Astrocyte of the cerebellum (primary cell): ENCODE measurements at regions of chr3 and their contacts with region 1.

Region 1: DNA sequence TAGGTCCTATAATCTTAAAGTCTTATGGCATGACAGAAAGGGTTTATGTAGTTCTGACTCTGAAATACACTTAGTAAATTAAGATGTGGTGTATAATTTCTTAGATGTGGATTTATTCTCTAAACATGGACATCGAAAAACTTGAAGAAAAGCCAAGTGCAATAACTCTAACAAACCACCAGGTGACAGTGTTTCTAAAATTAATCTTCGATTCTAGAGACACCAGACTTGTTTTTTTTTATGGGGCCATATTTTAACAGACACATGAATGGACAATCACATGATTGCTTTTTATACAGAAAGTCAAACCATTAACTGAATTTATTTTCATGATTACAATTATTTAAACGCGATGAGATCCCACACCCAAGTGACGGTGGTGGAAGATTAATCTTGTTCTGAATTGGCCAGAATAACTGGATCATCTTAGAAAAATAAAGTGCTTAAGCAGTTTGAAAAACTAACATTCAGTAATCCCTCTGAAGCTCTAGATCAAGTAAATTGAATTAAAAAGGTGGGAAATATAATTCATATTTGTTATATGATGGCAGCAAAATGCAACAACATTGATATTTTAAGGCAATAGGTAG is 305.1 kb downstream of the LSAMP start:
- DNase-seq: no peak
- H3K4me3 ChIP-seq: no peak overlapping the region
- CTCF ChIP-seq: peak; percentile 66

Region 2: DNA sequence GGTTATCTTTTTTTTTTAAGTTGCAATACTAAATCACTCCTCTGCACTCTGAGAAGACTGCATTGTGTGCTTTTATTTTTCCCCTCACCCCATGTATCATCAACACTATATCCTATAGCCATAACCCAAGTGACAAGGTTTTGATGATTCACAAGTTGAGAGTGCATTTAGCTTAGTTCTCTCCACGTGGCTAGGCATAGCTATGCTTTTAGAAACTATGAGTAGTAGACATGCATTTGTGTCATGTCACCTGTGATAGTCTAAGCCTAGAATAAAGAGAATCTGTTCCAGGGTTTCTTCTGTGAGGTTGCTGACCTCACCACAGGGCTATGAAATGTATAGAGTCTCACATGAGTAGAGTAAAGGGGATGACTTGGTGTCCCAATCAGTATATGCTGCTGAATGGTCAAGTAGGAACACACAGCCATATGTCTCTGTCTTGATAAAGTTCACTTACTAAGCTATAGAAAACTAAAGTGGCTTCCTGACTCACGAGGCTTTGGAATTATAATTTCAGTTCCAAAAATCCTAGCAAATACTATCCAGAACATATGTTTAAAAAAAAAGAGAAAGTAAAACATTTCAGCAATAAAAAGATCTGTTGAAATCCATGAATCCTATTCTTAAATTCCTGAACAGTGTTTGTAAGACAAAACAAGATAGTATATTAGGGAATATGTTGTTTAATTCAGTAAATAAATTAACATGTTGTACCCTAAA is 98.8 kb after region 1 on chr3:
- in situ Hi-C with region 1: loop called (anchors 25 kb)
- DNase-seq: no peak
- H3K4me3 ChIP-seq: no peak overlapping the region
- CTCF ChIP-seq: no peak

Region 3: DNA sequence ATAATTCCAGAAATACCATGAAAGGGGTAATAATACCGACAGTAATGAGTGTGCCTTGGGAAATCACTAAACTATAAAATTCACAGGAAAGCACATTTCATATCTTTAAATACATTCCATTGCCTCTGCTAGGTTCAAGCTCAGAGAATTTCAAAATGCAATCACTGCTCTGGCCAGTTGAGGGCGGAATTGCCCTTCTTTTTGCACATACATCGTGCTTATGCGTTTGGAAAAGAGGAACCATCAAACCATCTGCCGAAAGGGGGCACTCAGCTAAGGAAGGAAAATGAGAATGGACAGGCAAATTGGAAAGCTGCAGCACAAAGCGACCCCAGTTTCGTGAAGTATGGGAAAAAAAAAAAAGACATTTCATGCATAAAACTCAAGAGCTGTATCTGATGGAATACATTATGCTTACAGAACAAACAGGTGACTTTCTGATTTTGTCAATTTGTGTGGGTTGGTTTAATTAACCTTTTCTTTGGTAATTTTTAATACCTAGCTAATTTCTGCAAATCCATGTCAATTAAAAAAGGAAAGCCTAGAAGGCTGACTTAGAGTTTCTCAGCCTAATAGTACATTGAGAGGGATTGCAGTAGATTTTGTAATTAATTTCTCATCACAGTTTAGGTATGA is 630.7 kb after region 1 on chr3:
- in situ Hi-C with region 1: loop called (anchors 25 kb)
- DNase-seq: peak; percentile 68
- H3K4me3 ChIP-seq: no peak overlapping the region
- CTCF ChIP-seq: peak; percentile 97